CD4-positive, alpha-beta memory T cell (primary cell): ENCODE measurements at regions of chr19 and their contacts with region 1.

Region 1: DNA sequence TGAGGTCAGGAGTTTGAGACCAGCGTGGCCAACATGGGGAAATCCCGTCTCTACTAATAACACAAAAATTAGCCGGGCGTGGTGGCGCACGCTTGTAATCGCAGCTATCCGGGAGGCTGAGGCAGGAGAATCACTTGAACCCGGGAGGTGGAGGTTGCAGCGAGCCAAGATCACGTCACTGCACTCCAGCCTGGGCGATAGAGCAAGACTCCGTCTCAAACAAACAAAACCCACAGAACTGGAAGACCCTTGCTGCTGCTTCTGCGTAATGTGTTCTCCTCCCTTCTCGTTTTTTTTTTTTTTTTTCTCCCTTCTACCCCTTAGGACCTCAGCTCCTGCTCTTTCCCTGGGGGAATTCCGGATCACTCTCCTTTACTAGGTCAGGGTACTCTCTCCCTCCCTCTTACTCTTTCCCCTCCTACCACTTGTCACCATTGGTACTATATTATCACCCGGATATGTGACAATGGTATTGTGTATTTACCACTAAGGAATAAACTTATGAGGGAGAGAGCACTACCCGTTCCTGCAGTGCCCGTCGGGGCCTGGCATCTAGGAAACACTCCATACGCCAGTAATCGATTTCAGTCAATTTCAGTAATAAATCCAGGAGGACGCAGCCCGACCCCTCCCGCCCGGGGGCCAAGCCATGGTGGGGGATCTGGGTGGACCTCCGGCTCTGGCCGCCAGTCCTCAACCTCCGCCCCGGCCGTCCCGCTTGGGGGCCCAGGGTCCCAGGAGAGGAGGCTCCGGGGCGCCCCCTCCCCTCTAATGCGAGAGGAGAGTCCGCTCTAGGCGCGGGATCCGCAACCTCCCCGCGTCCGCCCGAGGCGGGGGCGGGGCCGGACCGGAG is 429 bp upstream of the GARRE1 start:
- DNase-seq: peak in 3 of 5 donors; percentile 80 to 85 (median 82)
- H3K4me3 ChIP-seq: peak overlapping the region; percentile 67 to 75
- H3K4me3 Mint-ChIP-seq: peak overlapping the region; percentile 96 to 100 (median 98)
- H3K27ac ChIP-seq: peak overlapping the region; percentile 90
- H3K27ac Mint-ChIP-seq: peak overlapping the region; percentile 81 to 100 (median 99)
- H3K4me1 ChIP-seq: peaks cover 32% of the 10 kb centered on the region
- H3K4me1 Mint-ChIP-seq: peaks cover 17 to 42% (median 32%) of the 10 kb centered on the region in 4 donors
- H3K27me3 ChIP-seq: no peaks in the 10 kb centered on the region
- H3K27me3 Mint-ChIP-seq: no peaks in the 10 kb centered on the region

Region 2: DNA sequence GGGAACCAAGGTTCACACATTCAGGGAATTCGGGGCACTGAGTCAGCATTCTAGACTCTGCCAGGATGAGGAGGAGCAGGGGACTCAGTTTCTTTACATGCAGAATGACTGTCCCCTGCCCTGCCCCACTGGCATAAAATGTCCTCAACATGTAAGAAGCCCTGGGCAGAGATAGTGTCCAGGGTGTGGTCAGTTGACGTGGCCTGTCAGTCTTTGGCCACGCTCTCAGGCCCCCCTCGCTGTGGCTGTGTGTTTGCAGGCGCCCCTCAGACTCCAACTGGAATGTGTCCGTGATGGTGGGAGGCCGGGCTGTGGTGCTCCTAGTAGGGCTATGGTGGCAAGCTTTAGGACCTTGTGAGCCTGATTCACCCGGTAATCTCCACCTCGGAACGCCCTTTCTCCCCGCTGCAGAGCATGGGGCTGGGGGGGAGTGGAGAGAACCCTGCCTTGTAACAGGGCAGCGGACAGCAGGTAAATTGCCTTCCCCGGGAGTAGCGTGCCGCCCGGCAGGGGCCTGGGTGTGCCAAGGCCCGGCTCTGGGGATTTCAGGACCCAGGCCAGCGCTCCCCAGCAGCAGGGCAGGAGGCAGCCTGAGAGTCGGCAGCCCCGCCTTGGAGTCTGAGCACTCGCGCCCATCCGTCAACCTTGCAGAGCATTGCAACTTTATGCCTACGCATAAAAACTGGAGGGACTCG is 569.9 kb before region 1 on chr19:
- CTCF ChIA-PET with region 1: no interaction called
- POLR2A ChIA-PET with region 1: no interaction called
- intact Hi-C with region 1: no loop called
- DNase-seq: no peak
- H3K4me3 ChIP-seq: no peak overlapping the region
- H3K4me3 Mint-ChIP-seq: no peak overlapping the region
- H3K27ac ChIP-seq: no peak overlapping the region
- H3K27ac Mint-ChIP-seq: no peak overlapping the region
- H3K4me1 ChIP-seq: no peaks in the 10 kb centered on the region
- H3K4me1 Mint-ChIP-seq: no peaks in the 10 kb centered on the region
- H3K27me3 ChIP-seq: no peaks in the 10 kb centered on the region
- H3K27me3 Mint-ChIP-seq: peaks cover 12 to 26% of the 10 kb centered on the region in 2 donors

Region 3: GRCh38 chr19:34193439-34193838 is 60.5 kb before region 1 on chr19:
- CTCF ChIA-PET with region 1: no interaction called
- POLR2A ChIA-PET with region 1: no interaction called
- intact Hi-C with region 1: no loop called
- DNase-seq: no peak
- H3K4me3 ChIP-seq: no peak overlapping the region
- H3K4me3 Mint-ChIP-seq: no peak overlapping the region
- H3K27ac ChIP-seq: no peak overlapping the region
- H3K27ac Mint-ChIP-seq: no peak overlapping the region
- H3K4me1 ChIP-seq: peaks cover 32% of the 10 kb centered on the region
- H3K4me1 Mint-ChIP-seq: peaks cover 37 to 42% (median 39%) of the 10 kb centered on the region in 4 donors
- H3K27me3 ChIP-seq: no peaks in the 10 kb centered on the region
- H3K27me3 Mint-ChIP-seq: no peaks in the 10 kb centered on the region

Region 4: GRCh38 chr19:34209726-34210125 is 44.2 kb before region 1 on chr19:
- CTCF ChIA-PET with region 1: no interaction called
- POLR2A ChIA-PET with region 1: no interaction called
- intact Hi-C with region 1: no loop called
- DNase-seq: no peak
- H3K4me3 ChIP-seq: no peak overlapping the region
- H3K4me3 Mint-ChIP-seq: no peak overlapping the region
- H3K27ac ChIP-seq: no peak overlapping the region
- H3K27ac Mint-ChIP-seq: peak overlapping the region in 3 of 7 donors; percentile 42 to 57 (median 48)
- H3K4me1 ChIP-seq: no peaks in the 10 kb centered on the region
- H3K4me1 Mint-ChIP-seq: peaks cover 3 to 8% (median 5%) of the 10 kb centered on the region in 4 donors
- H3K27me3 ChIP-seq: no peaks in the 10 kb centered on the region
- H3K27me3 Mint-ChIP-seq: no peaks in the 10 kb centered on the region

Region 5: DNA sequence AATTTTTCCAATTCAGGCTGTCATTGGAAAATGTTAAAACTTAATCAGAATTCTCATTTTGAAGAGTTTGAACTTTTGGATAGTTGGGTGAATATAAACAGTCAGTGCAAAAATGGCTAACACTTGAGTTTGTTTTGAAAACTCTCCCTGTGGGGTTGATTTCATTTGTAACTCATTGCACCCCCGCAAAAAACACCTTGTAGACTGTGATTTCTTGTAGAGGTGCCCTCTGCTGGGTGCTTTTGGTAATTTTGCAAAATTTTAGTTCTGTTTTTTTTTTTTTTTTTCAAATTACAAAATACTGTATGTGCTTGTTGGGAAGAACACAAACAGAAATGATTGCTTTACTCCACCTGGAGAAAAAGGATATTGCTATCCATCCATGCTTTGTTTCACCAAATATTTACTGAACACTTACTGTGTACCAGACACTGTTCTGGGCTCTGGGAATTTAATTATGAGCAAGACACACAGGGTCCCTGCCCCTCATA is 82.9 kb after region 1 on chr19:
- CTCF ChIA-PET with region 1: interaction called, 4 read pairs
- POLR2A ChIA-PET with region 1: interaction called, 4 read pairs
- intact Hi-C with region 1: loop called (anchors 2 kb)
- DNase-seq: peak; percentile 54 to 58 (median 56)
- H3K4me3 ChIP-seq: no peak overlapping the region
- H3K4me3 Mint-ChIP-seq: no peak overlapping the region
- H3K27ac ChIP-seq: no peak overlapping the region
- H3K27ac Mint-ChIP-seq: peak overlapping the region in 6 of 7 donors; percentile 10 to 80 (median 64)
- H3K4me1 ChIP-seq: peaks cover 11% of the 10 kb centered on the region
- H3K4me1 Mint-ChIP-seq: peaks cover 4 to 10% (median 8%) of the 10 kb centered on the region in 4 donors
- H3K27me3 ChIP-seq: no peaks in the 10 kb centered on the region
- H3K27me3 Mint-ChIP-seq: no peaks in the 10 kb centered on the region